H1 (cell line): ENCODE measurements at regions of chr19 and their contacts with region 1.

Region 1: GRCh38 chr19:20999731-21000352 is 20.6 kb upstream of the ZNF430 start:
- DNase-seq: peak; percentile 77 to 92
- H3K4me3 ChIP-seq: peak overlapping the region; percentile 74 to 97 (median 84)
- H3K27ac ChIP-seq: peak overlapping the region; percentile 95
- H3K4me1 ChIP-seq: peaks cover 0 to 3% (median under 1%) of the 10 kb centered on the region in 4 experiments; a peak in 1 of 7 replicates
- H3K27me3 ChIP-seq: no peaks in the 10 kb centered on the region
- CTCF ChIP-seq: no peak
- EP300 ChIP-seq: no peak
- POLR2A ChIP-seq: peak; percentile 96 to 99
- RAD21 ChIP-seq: no peak

Region 2: DNA sequence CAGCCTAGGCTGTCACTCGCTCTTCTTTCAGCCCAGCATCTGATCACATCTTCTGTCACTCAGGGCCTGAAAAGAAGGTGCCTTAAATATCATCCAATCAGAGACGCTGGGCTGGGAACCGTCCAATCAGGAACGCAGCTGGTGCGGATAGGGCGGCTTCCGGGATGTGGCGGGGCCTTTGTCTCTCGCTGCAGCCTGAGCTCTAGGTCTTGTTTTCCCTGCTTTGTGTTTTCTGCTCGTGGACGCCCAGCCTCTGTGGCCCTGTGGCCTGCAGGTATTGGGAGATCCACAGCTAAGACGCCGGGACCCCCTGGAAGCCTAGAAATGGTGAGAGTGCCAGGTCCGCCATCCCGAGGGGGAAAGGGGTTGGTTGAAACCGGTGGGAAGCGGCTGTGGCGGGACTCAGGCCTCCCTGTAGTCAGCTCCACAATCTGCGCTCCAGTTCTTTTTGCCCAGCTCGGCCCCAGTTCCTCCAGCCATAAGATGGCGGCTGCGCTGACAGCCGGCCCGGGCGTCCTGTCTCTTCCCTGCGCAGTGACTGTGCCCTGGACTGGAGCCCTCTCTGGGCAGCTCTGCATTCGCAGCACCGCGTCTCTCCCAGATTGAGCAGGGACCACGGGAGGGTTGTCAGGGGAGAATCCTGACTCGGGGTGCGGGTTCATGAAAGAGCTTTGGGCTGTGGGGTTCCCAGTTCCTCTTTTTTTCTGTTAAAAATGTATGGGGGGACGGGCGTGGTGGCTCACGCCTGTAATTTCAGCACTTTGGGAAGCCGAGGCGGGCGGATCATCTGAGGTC is 76.6 kb before region 1 on chr19 and contains the start of gene ZNF85:
- CTCF ChIA-PET with region 1: no interaction called
- POLR2A ChIA-PET with region 1: interaction called, 11 read pairs
- DNase-seq: peak; percentile 74 to 88
- H3K4me3 ChIP-seq: peak within 1 kb of the TSS; percentile 56 to 94 (median 83)
- H3K27ac ChIP-seq: peak within 1 kb of the TSS; percentile 98
- H3K4me1 ChIP-seq: no peaks in the 10 kb centered on the region; a peak in 1 of 7 replicates
- H3K27me3 ChIP-seq: no peaks in the 10 kb centered on the region
- CTCF ChIP-seq: no peak
- EP300 ChIP-seq: no peak
- POLR2A ChIP-seq: peak; percentile 88 to 96
- RAD21 ChIP-seq: no peak
- total RNA-seq, gene ZNF85: 22.2 and 23.1 TPM in 2 replicates

Region 3: DNA sequence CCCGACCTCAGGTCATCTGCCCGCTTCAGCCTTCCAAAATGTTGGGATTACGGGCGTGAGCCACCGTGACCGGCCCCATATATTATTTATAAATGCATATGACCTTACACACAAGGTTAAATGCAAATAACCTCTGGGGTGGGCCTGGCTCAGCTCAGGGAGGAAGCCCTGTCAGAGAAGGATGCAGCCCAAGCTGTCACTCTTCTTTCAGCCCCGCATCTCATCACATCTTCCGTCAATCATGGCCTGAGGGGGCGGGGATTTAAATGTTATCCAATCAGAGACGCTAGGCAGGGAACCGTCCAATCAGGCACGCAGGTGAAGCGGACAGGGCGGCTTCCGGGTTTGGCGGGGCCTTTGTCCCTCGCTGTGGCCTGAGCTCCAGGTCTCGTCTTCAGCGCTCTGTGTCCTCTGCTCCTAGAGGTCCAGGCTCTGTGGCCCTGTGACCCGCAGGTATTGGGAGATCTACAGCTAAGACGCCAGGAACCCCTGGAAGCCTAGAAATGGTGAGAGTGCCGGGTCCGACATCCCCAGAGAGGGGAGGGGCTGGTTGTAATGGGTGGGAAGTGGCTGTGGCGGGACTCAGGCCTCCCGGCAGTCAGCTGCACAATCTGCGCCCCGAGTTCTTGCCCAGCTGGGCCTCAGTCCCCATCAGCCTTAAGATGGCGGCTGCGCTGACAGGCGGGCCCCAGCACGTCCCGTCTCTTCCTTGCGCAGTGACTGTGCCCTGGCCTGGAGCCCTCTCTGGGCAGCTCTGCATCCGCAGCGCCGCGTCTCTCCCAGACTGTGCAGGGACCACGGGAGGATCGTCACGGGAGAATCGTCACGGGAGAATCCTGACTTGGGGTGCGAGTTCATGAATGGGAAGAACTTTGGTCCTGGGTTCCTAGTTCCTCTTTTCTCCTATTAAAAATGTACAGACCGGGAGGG is 20.7 kb after region 1 on chr19 and contains the start of gene ZNF430:
- CTCF ChIA-PET with region 1: no interaction called
- POLR2A ChIA-PET with region 1: interaction called, 14 read pairs
- DNase-seq: peak; percentile 91 to 95
- H3K4me3 ChIP-seq: peak within 1 kb of the TSS; percentile 59 to 96 (median 90)
- H3K27ac ChIP-seq: peak within 1 kb of the TSS; percentile 71
- H3K4me1 ChIP-seq: peaks cover 0 to 2% (median 0%) of the 10 kb centered on the region in 4 experiments; a peak in 1 of 7 replicates
- H3K27me3 ChIP-seq: no peaks in the 10 kb centered on the region
- CTCF ChIP-seq: no peak
- EP300 ChIP-seq: no peak
- POLR2A ChIP-seq: peak in 1 of 2 experiments; percentile 87; a peak in 2 of 3 replicates
- RAD21 ChIP-seq: no peak
- total RNA-seq, gene ZNF430: 10.1 and 16.1 TPM in 2 replicates

Region 4: DNA sequence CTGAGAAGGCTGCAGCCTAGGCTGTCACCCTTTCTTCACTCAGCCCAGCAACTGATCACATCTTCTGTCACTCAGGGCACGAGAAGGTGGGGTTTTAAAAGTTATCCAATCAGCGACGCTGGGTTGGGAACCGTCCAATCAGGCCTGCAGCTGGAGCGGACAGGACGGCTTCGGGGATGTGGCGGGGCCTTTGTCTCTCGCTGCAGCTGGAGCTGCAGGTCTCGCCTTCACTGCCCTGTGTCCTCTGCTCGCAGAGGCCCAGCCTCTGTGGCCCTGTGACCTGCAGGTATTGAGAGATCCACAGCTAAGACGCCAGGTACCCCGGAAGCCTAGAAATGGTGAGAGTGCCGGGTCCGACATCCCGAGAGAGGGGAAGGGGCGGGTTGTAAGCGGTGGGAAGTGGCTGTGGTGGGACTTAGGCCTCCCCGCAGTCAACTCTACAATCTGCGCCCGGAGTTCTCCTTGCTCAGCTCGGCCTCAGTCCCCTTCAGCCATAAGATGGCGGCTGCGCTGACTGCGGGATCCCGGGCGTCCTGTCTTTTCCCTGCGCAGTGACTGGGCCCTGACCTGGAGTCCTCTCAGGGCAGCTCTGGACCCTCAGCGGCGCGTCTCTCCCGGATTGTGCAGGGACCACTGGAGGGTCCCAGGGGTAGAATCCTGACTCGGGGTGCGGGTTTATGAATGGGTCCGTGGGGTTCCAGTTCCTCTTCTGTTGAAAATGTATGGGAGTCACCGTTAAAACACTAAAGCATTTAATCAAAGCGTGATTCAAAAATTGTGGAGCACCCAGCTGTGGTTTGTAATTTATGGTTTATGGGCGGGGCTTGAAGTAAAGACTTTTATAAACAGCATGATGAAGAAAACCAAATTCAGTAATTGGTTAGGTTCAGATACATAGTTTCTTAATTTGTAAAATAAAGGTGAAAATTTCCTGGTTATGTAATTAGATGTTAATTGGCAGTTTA is 82.5 kb after region 1 on chr19 and contains the start of gene ZNF714:
- CTCF ChIA-PET with region 1: no interaction called
- POLR2A ChIA-PET with region 1: interaction called, 14 read pairs
- DNase-seq: peak; percentile 86 to 91
- H3K4me3 ChIP-seq: peak within 1 kb of the TSS; percentile 83 to 97 (median 87)
- H3K27ac ChIP-seq: peak within 1 kb of the TSS; percentile 86
- H3K4me1 ChIP-seq: peaks cover 0 to 2% (median under 1%) of the 10 kb centered on the region in 4 experiments; a peak in 3 of 7 replicates
- H3K27me3 ChIP-seq: no peaks in the 10 kb centered on the region
- CTCF ChIP-seq: no peak
- EP300 ChIP-seq: no peak
- POLR2A ChIP-seq: peak; percentile 96 to 97
- RAD21 ChIP-seq: no peak
- total RNA-seq, gene ZNF714: 71.8 and 74.2 TPM in 2 replicates

Region 5: GRCh38 chr19:21094347-21095025 is 94.6 kb after region 1 on chr19:
- CTCF ChIA-PET with region 1: no interaction called
- POLR2A ChIA-PET with region 1: no interaction called
- DNase-seq: no peak
- H3K4me3 ChIP-seq: no peak overlapping the region
- H3K27ac ChIP-seq: no peak overlapping the region
- H3K4me1 ChIP-seq: peaks cover 0 to 4% (median 0%) of the 10 kb centered on the region in 4 experiments; a peak in 3 of 7 replicates
- H3K27me3 ChIP-seq: no peaks in the 10 kb centered on the region
- CTCF ChIP-seq: no peak
- EP300 ChIP-seq: no peak
- POLR2A ChIP-seq: no peak
- RAD21 ChIP-seq: no peak